Posterior vena cava (tissue), 2 donors: ENCODE measurements at regions of chr20 and their contacts with region 1.

Region 1: DNA sequence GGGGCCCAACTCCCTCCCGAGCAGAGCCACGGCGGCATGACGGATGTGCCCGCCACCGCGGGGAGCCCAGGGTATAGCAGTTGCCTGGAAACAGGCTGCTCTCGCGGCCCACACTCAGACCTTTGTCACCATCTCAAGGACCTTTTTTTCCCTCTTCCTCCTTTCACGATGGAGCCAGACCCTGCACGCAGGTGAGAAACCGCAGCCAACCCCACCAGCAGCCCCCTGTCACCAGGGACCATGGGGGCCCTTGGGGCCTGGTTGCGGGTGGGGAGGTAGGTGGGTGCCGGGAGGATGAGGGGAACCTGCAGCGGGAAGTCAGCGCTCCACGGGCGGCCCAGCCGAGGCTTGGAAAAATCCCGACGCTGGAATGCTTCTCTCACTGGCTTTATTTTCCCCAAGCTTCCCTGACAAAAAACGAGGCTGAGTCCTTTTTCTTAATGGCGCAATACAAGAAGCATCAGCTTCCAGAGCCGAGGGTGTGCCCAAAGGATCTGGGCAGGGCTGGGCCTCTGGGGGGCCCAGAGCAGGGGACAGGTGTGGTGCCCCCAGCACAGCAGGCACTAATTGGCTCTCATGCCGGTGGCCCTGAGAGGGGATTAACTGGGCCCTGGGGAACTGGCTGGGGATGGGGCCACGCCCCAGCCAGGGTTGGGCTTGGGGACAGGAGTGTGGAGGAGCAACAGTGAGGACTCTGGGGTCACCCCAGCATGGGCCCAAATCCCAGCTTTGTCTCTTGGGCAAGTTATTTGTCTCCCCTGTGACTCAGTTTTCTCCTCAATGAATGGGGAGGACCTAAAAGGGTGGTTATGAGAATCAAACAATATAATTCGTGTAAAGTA is 23.9 kb downstream of the NOL4L start:
- DNase-seq: no peak

Region 2: DNA sequence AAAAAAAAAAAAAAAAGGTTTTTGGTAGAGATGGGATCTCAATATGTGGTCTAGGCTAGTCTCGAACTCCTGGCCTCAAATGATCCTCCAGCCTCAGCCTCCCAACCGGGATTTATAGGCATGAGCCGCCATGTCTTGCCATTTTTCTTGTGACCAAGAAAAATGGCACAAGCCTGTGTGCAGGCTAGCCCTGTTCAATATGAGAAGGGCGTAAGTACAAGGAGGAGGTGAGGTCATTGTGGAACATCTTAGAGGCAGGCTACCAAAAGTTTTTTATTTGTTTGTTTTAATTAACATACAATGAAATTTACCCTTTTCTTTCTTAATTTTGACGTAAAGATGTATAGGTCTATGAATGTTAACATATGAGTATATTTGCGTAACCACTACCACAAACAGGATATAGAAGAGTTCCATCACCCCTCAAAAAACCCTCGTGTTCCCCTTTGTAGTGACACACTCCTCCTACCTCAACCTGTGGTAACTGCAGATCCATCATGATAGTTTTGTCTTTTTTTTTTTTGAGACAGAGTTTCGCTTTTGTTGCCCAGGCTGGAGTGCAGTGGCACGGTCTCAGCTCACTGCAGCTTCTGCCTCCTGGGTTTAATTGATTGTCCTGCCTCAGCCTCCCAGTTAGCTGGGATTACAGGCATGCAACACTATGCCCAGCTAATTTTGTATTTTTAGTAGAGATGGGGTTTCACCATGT is 312.0 kb before region 1 on chr20:
- intact Hi-C with region 1: loop called in 1 of 2 experiments (anchors 5 kb)
- DNase-seq: no peak

Region 3: DNA sequence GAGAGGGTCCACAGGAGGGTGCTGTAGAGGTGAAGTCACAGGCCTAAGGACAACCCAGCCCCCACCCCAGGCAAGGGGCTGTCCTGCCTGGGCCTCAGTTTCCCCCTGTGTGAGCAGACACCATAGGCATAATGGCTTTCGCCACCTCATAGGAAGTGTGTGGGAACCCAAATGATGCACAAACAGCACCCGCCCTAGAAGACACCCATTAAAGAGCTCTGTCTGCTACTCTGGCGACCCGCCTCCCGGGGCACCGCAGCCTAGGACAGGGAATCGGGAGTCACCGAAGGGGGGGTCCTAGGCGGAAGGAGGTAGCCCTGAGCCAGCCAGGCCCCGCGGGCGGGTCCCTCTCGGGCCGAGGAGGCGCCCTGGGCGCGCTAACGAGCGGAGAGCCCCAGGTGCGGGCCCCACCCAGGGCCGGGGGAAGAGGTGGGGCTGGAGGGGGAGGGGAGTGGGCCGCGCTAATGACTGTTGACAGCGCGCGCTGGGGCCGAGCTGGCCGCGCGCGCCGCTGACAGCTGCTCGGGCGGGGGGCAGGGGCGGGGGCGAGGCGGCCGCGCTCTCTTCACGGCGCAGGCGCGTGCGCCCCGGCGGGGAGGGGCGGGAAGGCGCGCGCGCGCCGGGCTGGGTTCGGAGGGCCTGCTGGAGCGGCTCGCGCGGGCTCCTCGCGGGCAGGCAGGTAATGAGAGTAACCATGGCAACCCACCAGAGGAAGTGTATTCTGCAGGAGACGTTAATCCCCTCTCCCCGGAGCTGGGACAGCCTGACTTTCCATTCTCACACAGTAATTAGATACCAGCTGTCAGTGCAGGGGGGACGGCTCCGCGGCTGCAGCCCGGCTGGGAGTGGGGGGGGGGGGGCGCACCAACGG is 25.0 kb before region 1 on chr20:
- intact Hi-C with region 1: no loop called
- DNase-seq: no peak

Region 4: GRCh38 chr20:32600681-32601237 is 39.5 kb after region 1 on chr20:
- intact Hi-C with region 1: no loop called
- DNase-seq: no peak